Posterior cingulate gyrus (tissue), 11 donors: ENCODE measurements at regions of chr15 and their contacts with region 1.

Region 1: GRCh38 chr15:73305331-73306211 is 63.2 kb downstream of the HCN4 start:
- DNase-seq: peak in 5 of 10 donors; percentile 34 to 89 (median 51)

Region 2: DNA sequence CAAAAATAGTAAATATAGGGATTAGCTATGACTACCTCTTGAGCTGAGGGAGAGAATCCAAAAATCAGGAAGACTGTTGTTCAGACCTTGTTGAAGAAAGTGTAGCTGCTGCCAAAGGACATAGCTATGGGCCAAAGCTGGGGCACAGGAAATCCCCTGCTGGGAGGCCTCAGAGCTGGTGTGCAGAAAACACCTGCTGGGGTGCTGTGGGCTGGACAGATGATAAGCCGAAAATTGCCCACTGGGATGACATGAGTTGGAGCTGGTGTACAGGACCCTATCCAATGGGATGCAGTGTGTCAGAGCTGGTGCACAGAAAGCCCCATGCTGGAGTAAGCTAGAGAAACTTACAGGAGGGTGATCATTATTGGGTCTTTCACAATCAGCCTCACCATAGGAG is 131.4 kb before region 1 on chr15:
- intact Hi-C with region 1: no loop called
- DNase-seq: no peak

Region 3: DNA sequence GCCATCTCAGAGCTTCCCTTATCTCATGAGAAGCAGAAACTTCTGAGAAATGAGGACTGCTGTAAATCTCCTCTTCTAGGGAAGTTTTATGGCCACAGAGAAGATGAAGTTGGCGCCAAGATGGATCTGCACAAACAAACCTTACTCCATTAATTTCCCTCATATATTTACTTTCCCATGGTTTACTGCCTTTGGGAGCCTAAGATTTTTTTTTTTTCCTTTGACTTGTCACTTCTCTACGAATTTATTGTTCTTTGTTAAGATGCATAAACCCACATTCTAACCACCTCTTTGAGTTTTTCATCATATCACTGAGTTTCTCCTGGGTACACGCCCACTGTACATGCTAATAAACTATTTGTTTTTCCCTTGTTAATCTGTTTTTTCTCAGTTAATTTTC is 349.1 kb after region 1 on chr15:
- intact Hi-C with region 1: no loop called
- DNase-seq: no peak

Region 4: GRCh38 chr15:73700041-73700842 is 394.7 kb after region 1 on chr15:
- intact Hi-C with region 1: loop called (anchors 2 kb)
- DNase-seq: peak; percentile 61 to 97 (median 84)